Mammary epithelial cell (primary cell): ENCODE measurements at regions of chr2 and their contacts with region 1.

Region 1: DNA sequence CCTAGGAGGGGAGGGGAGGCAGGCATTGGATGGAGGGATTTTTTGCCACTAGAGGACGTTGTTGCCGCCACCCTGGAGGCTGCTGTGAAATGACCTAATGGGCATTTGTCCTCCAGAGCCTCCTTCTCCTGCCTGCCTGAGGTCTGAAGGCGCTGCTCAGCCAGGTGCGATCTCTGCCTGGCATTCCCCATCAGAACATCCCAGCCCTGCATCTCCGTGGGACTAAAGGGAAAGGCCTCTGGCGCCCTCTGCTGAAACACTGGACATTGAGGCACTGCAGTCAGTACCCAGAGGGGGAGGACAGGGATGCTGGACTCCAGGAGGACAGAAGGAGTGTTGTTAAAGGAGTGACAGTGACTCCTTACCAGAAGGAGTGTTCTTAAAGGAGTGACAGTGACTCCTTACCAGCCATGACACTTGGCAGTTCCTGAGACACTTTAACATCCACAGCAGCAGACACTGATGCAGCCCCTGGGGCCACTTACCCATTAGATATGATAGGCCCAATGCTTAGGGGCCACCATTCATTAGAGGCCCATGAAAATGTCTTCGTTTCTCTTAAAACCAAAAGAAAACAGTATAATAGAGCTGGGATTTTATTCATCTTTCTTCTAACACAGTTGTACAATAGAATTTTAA is 17.0 kb downstream of the THNSL2 start:
- DNase-seq: peak; percentile 72
- H3K4me3 ChIP-seq: no peak overlapping the region
- H3K27ac ChIP-seq: no peak overlapping the region
- H3K4me1 ChIP-seq: peaks cover 4% of the 10 kb centered on the region
- H3K27me3 ChIP-seq: no peaks in the 10 kb centered on the region
- CTCF ChIP-seq: peak; percentile 78 to 96

Region 2: GRCh38 chr2:88055371-88056128 is 131.6 kb before region 1 on chr2 and contains the start of gene KRCC1:
- CTCF ChIA-PET with region 1: interaction called, 5 read pairs
- dilution Hi-C with region 1: no loop called
- in situ Hi-C with region 1: no loop called
- intact Hi-C with region 1: loop called (anchors 1 kb)
- DNase-seq: peak; percentile 95
- H3K4me3 ChIP-seq: peak within 1 kb of the TSS; percentile 79 to 91 (median 79)
- H3K27ac ChIP-seq: peak within 1 kb of the TSS; percentile 88
- H3K4me1 ChIP-seq: peaks cover 19% of the 10 kb centered on the region
- H3K27me3 ChIP-seq: no peaks in the 10 kb centered on the region
- CTCF ChIP-seq: no peak
- total RNA-seq, gene KRCC1: 12.7 to 24.5 TPM

Region 3: DNA sequence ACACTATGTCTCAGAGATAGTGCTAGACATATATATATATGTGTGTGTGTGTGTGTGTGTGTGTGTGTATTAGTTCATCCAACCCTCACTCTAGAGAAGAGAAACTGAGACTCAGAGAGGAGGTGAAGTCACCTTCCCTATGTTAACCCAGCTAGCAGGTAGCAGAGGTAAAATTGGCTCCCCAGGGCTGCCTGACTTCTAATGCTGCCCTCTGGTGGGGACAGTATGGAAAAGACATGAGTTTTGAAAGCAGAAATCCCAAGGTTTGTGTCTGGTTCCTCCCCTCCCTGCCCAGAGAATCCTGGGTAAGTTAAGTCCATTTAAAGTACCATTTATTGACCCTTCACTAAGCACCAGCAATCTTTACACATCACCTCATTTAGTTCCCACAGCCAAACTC is 120.7 kb after region 1 on chr2:
- CTCF ChIA-PET with region 1: interaction called, 3 read pairs
- dilution Hi-C with region 1: no loop called
- in situ Hi-C with region 1: loop called in 1 of 2 experiments (anchors 10 kb)
- intact Hi-C with region 1: loop called (anchors 1 kb)
- DNase-seq: peak; percentile 29
- H3K4me3 ChIP-seq: no peak overlapping the region
- H3K27ac ChIP-seq: no peak overlapping the region
- H3K4me1 ChIP-seq: no peaks in the 10 kb centered on the region
- H3K27me3 ChIP-seq: no peaks in the 10 kb centered on the region
- CTCF ChIP-seq: peak; percentile 51 to 71

Region 4: DNA sequence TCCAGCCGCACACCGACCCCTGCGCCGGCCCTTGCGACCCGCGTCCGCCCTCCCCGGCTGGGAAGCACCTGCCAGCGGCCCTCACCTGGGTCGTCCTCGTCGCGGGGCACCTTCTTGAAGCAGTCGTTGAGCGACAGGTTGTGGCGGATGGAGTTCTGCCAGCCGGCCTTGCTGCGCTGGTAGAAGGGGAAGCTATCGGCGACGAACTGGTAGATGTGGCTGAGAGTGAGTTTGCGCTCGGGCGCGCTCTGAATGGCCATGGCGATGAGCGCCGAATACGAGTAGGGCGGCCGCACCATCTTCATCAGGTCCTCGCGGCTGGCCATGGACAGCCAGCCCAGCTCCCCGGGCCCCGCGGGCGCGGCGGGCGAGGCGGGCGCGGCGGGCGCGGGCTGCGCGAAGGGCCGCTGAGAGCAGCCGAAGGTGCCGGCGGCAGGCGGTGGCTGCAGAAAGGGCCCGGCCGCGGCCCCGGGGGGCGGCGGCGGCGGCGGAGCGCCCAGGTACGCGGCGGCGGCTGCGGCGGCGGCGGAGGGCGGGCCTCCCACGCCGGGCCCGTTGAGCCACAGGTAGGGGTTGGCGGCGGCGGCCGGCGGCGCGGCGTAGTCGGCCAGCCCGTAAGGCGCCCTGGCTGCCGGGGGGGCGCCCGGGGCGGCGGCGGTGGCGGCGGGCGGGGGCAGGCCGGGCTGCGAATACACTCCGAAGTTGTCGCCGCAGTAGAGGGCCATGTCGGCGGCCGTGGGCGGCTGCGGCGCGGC is 264.8 kb after region 1 on chr2:
- CTCF ChIA-PET with region 1: no interaction called
- dilution Hi-C with region 1: no loop called
- in situ Hi-C with region 1: loop called in 1 of 2 experiments (anchors 25 kb)
- intact Hi-C with region 1: loop called (anchors 1 kb)
- DNase-seq: peak; percentile 26
- H3K4me3 ChIP-seq: peak overlapping the region; percentile 7 to 60 (median 44)
- H3K27ac ChIP-seq: no peak overlapping the region
- H3K4me1 ChIP-seq: peaks cover 13% of the 10 kb centered on the region
- H3K27me3 ChIP-seq: peaks cover 3% of the 10 kb centered on the region
- CTCF ChIP-seq: no peak

Region 5: DNA sequence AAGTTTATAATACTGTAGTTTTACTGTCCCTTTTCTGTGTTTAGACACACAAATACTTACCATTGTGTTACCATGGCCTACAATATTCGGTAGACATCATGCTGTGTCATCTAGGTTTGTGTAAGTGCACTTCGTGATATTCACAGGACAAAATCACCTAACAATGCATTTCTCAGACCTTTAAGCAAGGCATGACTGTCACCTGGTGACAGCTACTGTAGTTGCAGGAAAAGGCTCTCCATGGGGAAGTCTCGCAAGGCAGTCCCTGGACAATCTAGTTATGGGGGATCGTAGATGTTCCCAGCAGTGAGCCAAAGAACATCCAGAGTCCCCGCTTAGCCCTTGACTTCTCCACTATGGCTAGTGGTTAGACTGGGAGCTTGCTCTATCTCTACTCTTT is 367.0 kb after region 1 on chr2:
- CTCF ChIA-PET with region 1: no interaction called
- dilution Hi-C with region 1: no loop called
- in situ Hi-C with region 1: loop called in 1 of 2 experiments (anchors 25 kb)
- intact Hi-C with region 1: loop called (anchors 1 kb)
- DNase-seq: peak; percentile 8
- H3K4me3 ChIP-seq: no peak overlapping the region
- H3K27ac ChIP-seq: no peak overlapping the region
- H3K4me1 ChIP-seq: peaks cover 4% of the 10 kb centered on the region
- H3K27me3 ChIP-seq: no peaks in the 10 kb centered on the region
- CTCF ChIP-seq: peak; percentile 39 to 73